ENCODE measurements at regions of chr12 and their contacts with region 1.

Region 1: DNA sequence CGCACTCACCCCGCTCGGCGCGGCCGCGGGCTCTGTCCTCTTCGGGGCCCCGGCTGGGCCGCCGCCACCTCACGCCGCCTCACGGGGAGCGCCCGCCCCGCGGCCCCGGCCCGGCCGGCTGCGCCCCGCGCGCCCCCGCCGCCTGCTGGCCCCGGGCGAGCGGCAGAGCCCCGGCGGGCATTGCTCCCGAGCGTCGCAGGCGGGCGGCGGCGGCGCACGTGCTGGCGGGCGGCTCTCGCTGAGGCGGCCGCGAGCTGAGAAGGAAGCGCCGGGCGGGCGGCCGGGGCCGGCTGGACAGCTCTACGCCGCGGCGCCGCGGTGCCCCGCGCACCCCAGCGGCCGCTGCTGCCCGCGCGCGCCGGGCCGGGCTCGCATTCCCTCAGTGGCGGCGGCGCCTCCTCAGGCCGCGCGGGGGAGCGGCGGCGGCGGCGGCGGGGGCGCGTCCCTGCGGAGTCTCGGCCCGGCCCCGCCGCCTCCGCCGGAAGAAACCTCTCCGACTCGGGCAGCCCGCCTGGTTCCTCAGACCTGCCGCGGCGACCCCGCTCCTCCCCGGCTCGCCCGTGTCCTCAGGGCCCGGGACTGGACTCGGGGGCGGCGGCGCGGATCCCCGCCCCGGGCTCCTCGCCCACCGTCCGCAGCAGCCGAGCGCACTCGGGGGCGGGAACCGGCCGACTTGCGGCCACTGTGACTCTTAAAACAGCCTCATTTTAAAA is at the start of gene PITPNM2:
- DNase-seq: peak; percentile 91
- H3K4me3 Mint-ChIP-seq: peak within 1 kb of the TSS; percentile 85
- H3K27ac Mint-ChIP-seq: peak within 1 kb of the TSS; percentile 86
- H3K4me1 Mint-ChIP-seq: peaks cover 32% of the 10 kb centered on the region
- H3K27me3 Mint-ChIP-seq: peaks cover 15% of the 10 kb centered on the region
- total RNA-seq, gene PITPNM2: 19.0 and 19.2 TPM in 2 replicates

Region 2: DNA sequence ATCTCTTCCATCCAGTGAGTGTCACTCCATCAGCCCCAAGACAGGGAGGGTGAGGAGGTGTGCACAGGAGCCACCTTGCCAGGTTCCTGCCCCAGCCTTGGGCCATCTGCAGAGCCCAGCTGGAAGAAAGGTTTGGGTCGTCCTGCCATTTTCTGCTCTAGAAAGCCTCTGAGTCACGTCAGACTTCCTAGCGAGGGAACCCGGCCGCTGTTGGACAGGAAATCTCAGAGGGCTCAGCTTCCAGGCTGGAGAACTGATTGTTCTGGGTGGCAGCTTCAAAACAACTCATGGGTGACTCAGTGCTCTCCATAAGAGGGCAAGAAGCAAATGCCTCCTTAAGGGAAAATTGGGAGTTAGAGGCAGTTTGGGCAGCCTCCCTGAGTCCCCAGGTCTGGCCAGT is 299.1 kb before region 1 on chr12:
- intact Hi-C with region 1: no loop called
- DNase-seq: no peak
- H3K4me3 Mint-ChIP-seq: no peak overlapping the region
- H3K27ac Mint-ChIP-seq: no peak overlapping the region
- H3K4me1 Mint-ChIP-seq: no peaks in the 10 kb centered on the region
- H3K27me3 Mint-ChIP-seq: no peaks in the 10 kb centered on the region

Region 3: DNA sequence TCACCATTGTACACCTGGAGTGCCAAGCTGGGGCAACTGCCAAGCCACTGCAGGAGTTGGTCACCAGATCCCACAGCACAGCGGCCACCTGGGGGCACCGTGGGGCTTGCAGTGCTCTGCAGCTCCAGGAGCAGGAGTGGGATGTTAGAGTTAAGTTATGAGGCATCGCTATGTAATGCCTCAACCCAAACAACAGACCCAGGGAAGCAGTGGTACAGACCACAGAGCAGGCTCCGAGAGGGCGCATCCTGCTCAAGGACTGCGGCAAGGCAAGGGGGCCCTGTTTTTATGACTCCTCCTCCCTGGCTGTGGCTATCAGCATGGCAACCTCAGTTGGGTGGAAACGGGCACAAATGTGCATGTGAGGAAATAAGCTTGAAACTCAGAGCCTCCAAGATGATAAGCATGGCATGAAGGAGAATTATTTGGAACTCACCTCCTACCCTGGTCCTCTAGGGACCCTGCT is 107.3 kb before region 1 on chr12:
- intact Hi-C with region 1: loop called (anchors 1 kb)
- DNase-seq: peak; percentile 89
- H3K4me3 Mint-ChIP-seq: no peak overlapping the region
- H3K27ac Mint-ChIP-seq: peak overlapping the region; percentile 78
- H3K4me1 Mint-ChIP-seq: peaks cover 22% of the 10 kb centered on the region
- H3K27me3 Mint-ChIP-seq: no peaks in the 10 kb centered on the region

Region 4: GRCh38 chr12:123106628-123107359 is 44.1 kb before region 1 on chr12:
- intact Hi-C with region 1: loop called (anchors 2 kb)
- DNase-seq: peak; percentile 92
- H3K4me3 Mint-ChIP-seq: peak overlapping the region; percentile 44
- H3K27ac Mint-ChIP-seq: peak overlapping the region; percentile 94
- H3K4me1 Mint-ChIP-seq: peaks cover 50% of the 10 kb centered on the region
- H3K27me3 Mint-ChIP-seq: no peaks in the 10 kb centered on the region

Region 5: GRCh38 chr12:123126186-123127006 is 24.5 kb before region 1 on chr12:
- intact Hi-C with region 1: no loop called
- DNase-seq: no peak
- H3K4me3 Mint-ChIP-seq: no peak overlapping the region
- H3K27ac Mint-ChIP-seq: no peak overlapping the region
- H3K4me1 Mint-ChIP-seq: peaks cover 24% of the 10 kb centered on the region
- H3K27me3 Mint-ChIP-seq: no peaks in the 10 kb centered on the region

Region 6: DNA sequence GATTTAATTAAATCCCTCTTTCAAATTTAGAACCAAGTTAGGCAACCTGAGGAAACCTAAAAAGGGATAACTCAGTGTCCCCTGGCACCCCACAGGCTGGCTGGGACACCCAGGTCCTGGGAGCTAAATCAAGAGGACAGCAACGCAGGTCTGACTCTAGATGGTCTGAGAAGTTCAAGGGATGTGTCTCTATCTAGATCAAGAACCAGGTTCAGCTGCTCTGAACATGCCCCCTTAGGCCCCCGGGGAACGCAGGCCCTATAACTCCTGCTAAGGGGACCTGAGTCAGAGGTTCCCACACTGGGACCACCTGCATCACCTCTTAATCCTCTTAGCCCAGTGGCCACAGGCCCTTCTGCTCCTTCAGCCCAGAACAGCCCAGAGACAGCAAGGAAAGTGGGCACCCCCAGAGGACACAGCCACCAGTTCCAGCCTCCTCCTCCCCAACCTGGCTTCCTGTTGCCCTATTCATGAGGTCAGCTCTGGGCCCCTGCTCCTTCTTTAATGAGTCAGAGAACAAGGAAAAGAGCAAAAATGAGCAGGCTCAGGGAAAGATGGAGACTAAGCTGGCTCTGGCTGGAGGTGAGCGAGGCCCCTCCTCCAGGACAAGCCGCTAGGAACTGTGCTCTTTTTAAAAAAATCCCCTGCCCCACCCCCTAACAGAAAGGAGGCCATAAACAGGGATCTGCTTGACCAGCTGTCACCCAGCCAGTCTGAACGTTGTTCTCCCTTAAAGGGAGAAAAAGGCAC is 10.8 kb before region 1 on chr12:
- intact Hi-C with region 1: no loop called
- DNase-seq: no peak
- H3K4me3 Mint-ChIP-seq: no peak overlapping the region
- H3K27ac Mint-ChIP-seq: no peak overlapping the region
- H3K4me1 Mint-ChIP-seq: peaks cover 13% of the 10 kb centered on the region
- H3K27me3 Mint-ChIP-seq: no peaks in the 10 kb centered on the region

Region 7: GRCh38 chr12:123167329-123167728 is 16.4 kb after region 1 on chr12:
- intact Hi-C with region 1: loop called (anchors 2 kb)
- DNase-seq: no peak
- H3K4me3 Mint-ChIP-seq: no peak overlapping the region
- H3K27ac Mint-ChIP-seq: no peak overlapping the region
- H3K4me1 Mint-ChIP-seq: peaks cover 6% of the 10 kb centered on the region
- H3K27me3 Mint-ChIP-seq: no peaks in the 10 kb centered on the region

Region 8: GRCh38 chr12:123271001-123271729 is 120.3 kb after region 1 on chr12:
- intact Hi-C with region 1: no loop called
- DNase-seq: peak; percentile 93
- H3K4me3 Mint-ChIP-seq: peak overlapping the region; percentile 92
- H3K27ac Mint-ChIP-seq: no peak overlapping the region
- H3K4me1 Mint-ChIP-seq: peaks cover 16% of the 10 kb centered on the region
- H3K27me3 Mint-ChIP-seq: no peaks in the 10 kb centered on the region